B cell (primary cell): ENCODE measurements at regions of chr7 and their contacts with region 1.

Region 1: DNA sequence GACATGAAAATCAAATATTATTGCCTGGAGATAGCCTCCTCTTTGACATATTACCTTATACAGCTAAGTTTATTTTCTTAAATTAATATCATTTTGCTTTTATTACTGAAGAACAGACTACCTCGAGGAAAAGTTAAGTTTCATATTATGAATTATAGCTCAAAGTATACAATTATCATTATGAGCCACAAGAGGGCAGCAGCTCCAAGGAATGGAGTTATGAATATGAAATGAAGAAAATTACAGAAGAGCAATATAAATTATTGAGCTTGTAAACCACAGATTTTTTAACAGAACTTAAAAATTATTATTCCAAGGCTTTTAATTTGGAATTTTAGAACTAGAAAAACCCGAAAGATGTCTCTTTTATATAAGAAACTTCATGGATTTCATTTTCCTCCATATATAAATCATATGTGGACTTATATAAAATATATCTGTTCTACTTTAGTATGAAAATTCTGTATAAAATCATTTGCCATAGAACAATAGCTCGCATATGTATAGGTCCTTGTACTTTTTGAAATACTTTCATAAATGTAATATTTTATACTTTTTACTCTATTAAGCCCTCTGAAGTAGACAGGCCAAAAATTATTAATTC is 40.1 kb downstream of the IQUB start:
- DNase-seq: peak; percentile 52
- ATAC-seq: no peak
- H3K4me3 ChIP-seq: no peak overlapping the region
- H3K4me3 Mint-ChIP-seq: no peak overlapping the region
- H3K27ac ChIP-seq: no peak overlapping the region
- H3K27ac Mint-ChIP-seq: no peak overlapping the region
- H3K4me1 ChIP-seq: no peaks in the 10 kb centered on the region
- H3K4me1 Mint-ChIP-seq: no peaks in the 10 kb centered on the region
- H3K27me3 ChIP-seq: peaks cover 0 to 5% (median 0%) of the 10 kb centered on the region in 4 experiments
- H3K27me3 Mint-ChIP-seq: peaks cover 12% of the 10 kb centered on the region
- CTCF ChIP-seq: peak; percentile 92

Region 2: GRCh38 chr7:123346766-123347165 is 147.5 kb before region 1 on chr7:
- CTCF ChIA-PET with region 1: no interaction called
- POLR2A ChIA-PET with region 1: no interaction called
- intact Hi-C with region 1: no loop called
- DNase-seq: no peak
- ATAC-seq: no peak
- H3K4me3 ChIP-seq: no peak overlapping the region
- H3K4me3 Mint-ChIP-seq: no peak overlapping the region
- H3K27ac ChIP-seq: no peak overlapping the region
- H3K27ac Mint-ChIP-seq: no peak overlapping the region
- H3K4me1 ChIP-seq: no peaks in the 10 kb centered on the region
- H3K4me1 Mint-ChIP-seq: no peaks in the 10 kb centered on the region
- H3K27me3 ChIP-seq: no peaks in the 10 kb centered on the region
- H3K27me3 Mint-ChIP-seq: no peaks in the 10 kb centered on the region
- CTCF ChIP-seq: no peak

Region 3: GRCh38 chr7:123437447-123437995 is 56.8 kb before region 1 on chr7:
- CTCF ChIA-PET with region 1: no interaction called
- POLR2A ChIA-PET with region 1: no interaction called
- intact Hi-C with region 1: no loop called
- DNase-seq: no peak
- ATAC-seq: no peak
- H3K4me3 ChIP-seq: no peak overlapping the region
- H3K4me3 Mint-ChIP-seq: no peak overlapping the region
- H3K27ac ChIP-seq: no peak overlapping the region
- H3K27ac Mint-ChIP-seq: no peak overlapping the region
- H3K4me1 ChIP-seq: no peaks in the 10 kb centered on the region
- H3K4me1 Mint-ChIP-seq: no peaks in the 10 kb centered on the region
- H3K27me3 ChIP-seq: no peaks in the 10 kb centered on the region
- H3K27me3 Mint-ChIP-seq: no peaks in the 10 kb centered on the region
- CTCF ChIP-seq: no peak

Region 4: GRCh38 chr7:123484199-123484598 is 10.1 kb before region 1 on chr7:
- CTCF ChIA-PET with region 1: interaction called, 10 read pairs
- POLR2A ChIA-PET with region 1: no interaction called
- intact Hi-C with region 1: no loop called
- DNase-seq: no peak
- ATAC-seq: no peak
- H3K4me3 ChIP-seq: no peak overlapping the region
- H3K4me3 Mint-ChIP-seq: no peak overlapping the region
- H3K27ac ChIP-seq: no peak overlapping the region
- H3K27ac Mint-ChIP-seq: no peak overlapping the region
- H3K4me1 ChIP-seq: no peaks in the 10 kb centered on the region
- H3K4me1 Mint-ChIP-seq: no peaks in the 10 kb centered on the region
- H3K27me3 ChIP-seq: peaks cover 0 to 4% (median 0%) of the 10 kb centered on the region in 4 experiments
- H3K27me3 Mint-ChIP-seq: peaks cover 4% of the 10 kb centered on the region
- CTCF ChIP-seq: no peak

Region 5: DNA sequence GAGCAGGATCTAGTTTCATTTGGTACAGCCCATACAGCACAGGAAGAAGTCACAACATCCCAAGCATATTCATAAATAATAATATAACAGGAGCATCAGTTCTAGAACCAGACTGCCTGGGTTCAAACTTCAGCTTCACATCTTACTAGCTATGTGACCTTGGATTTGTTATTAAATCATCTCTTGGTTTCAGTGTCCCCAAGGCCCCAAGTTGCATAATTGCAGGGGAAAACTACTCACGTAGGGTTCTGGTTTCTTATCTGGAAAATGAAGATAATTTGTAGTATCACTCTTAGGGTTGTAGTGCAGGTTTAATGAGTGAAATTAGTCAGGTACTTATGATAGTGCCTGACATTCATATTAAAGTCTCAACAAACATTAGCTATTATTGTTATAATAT is 45.6 kb after region 1 on chr7:
- CTCF ChIA-PET with region 1: interaction called, 19 read pairs
- POLR2A ChIA-PET with region 1: no interaction called
- intact Hi-C with region 1: loop called (anchors 1 kb)
- DNase-seq: no peak
- ATAC-seq: no peak
- H3K4me3 ChIP-seq: no peak overlapping the region
- H3K4me3 Mint-ChIP-seq: no peak overlapping the region
- H3K27ac ChIP-seq: no peak overlapping the region
- H3K27ac Mint-ChIP-seq: no peak overlapping the region
- H3K4me1 ChIP-seq: peaks cover 3 to 8% of the 10 kb centered on the region in 2 donors
- H3K4me1 Mint-ChIP-seq: peaks cover 6% of the 10 kb centered on the region
- H3K27me3 ChIP-seq: no peaks in the 10 kb centered on the region
- H3K27me3 Mint-ChIP-seq: no peaks in the 10 kb centered on the region
- CTCF ChIP-seq: no peak

Region 6: DNA sequence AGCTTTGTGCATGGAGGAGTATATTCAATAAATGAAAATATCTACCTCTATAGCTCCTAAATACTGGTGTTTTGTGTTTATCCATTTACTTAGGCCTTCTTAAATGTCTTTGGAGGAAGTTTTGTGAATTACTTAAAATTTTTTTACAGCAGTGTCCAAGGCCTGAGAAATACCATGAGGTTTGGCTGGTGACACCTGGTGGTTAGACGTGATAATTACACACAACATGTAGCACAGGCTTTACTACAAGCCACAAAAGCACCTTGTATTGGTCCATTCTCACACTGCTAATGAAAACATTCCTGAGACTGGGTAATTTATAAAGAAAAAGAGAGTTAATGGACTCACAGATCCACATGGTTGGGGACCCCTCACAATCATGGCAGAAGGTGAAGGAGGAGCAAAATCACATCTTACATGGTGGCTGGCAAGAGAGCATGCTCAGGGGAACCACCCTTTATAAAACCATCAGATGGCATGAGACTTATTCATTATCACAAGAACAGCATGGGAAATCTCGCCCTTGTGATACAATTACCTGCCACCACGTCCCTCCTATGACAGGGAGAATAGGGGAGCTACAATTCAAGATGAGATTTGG is 371.3 kb after region 1 on chr7:
- CTCF ChIA-PET with region 1: interaction called, 10 read pairs
- POLR2A ChIA-PET with region 1: no interaction called
- intact Hi-C with region 1: no loop called
- DNase-seq: peak; percentile 59
- ATAC-seq: peak; percentile 53
- H3K4me3 ChIP-seq: no peak overlapping the region
- H3K4me3 Mint-ChIP-seq: no peak overlapping the region
- H3K27ac ChIP-seq: no peak overlapping the region
- H3K27ac Mint-ChIP-seq: no peak overlapping the region
- H3K4me1 ChIP-seq: no peaks in the 10 kb centered on the region
- H3K4me1 Mint-ChIP-seq: no peaks in the 10 kb centered on the region
- H3K27me3 ChIP-seq: no peaks in the 10 kb centered on the region
- H3K27me3 Mint-ChIP-seq: peaks cover 3% of the 10 kb centered on the region
- CTCF ChIP-seq: peak; percentile 82

Region 7: DNA sequence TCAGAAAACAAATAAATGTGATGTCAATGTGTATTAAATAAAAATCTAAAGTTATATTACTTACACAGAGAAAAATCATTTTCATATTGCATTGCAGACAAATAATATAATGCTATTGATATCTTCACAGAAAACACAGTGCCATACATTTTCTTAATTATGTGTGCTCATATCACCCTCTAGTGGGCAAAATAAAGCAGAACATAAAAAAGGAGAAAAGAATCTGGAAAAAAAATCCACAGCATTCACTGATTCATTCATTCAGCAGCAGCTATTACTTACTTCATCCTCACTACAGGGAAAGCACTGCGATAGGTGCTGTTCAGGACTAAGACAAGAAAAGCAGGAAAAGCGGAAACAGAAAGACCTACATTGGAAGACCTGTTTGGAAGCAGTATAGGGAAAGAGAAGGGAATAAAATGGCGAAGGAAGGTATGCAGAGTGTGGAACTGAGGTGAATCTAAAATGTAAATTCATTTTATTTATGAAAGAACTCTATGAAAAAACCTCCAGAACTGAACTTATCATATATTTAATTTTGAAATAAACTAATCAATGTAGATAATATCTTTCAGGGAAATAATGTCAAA is 1362.1 kb after region 1 on chr7:
- CTCF ChIA-PET with region 1: no interaction called
- POLR2A ChIA-PET with region 1: no interaction called
- intact Hi-C with region 1: loop called (anchors 5 kb)
- DNase-seq: peak; percentile 23
- ATAC-seq: no peak
- H3K4me3 ChIP-seq: no peak overlapping the region
- H3K4me3 Mint-ChIP-seq: no peak overlapping the region
- H3K27ac ChIP-seq: no peak overlapping the region
- H3K27ac Mint-ChIP-seq: no peak overlapping the region
- H3K4me1 ChIP-seq: no peaks in the 10 kb centered on the region
- H3K4me1 Mint-ChIP-seq: no peaks in the 10 kb centered on the region
- H3K27me3 ChIP-seq: no peaks in the 10 kb centered on the region
- H3K27me3 Mint-ChIP-seq: no peaks in the 10 kb centered on the region
- CTCF ChIP-seq: peak; percentile 76